MCF 10A (cell line): ENCODE measurements at regions of chr11 and their contacts with region 1.

Region 1: GRCh38 chr11:64971421-64972233 is at the start of gene MAJIN:
- DNase-seq: no peak
- H3K4me3 Mint-ChIP-seq: no peak within 1 kb of the TSS
- H3K27ac Mint-ChIP-seq: peak within 1 kb of the TSS; percentile 76
- H3K4me1 Mint-ChIP-seq: peaks cover 21% of the 10 kb centered on the region
- H3K27me3 Mint-ChIP-seq: no peaks in the 10 kb centered on the region
- CTCF ChIP-seq: no peak
- total RNA-seq, gene MAJIN: not detected in 2 replicates

Region 2: DNA sequence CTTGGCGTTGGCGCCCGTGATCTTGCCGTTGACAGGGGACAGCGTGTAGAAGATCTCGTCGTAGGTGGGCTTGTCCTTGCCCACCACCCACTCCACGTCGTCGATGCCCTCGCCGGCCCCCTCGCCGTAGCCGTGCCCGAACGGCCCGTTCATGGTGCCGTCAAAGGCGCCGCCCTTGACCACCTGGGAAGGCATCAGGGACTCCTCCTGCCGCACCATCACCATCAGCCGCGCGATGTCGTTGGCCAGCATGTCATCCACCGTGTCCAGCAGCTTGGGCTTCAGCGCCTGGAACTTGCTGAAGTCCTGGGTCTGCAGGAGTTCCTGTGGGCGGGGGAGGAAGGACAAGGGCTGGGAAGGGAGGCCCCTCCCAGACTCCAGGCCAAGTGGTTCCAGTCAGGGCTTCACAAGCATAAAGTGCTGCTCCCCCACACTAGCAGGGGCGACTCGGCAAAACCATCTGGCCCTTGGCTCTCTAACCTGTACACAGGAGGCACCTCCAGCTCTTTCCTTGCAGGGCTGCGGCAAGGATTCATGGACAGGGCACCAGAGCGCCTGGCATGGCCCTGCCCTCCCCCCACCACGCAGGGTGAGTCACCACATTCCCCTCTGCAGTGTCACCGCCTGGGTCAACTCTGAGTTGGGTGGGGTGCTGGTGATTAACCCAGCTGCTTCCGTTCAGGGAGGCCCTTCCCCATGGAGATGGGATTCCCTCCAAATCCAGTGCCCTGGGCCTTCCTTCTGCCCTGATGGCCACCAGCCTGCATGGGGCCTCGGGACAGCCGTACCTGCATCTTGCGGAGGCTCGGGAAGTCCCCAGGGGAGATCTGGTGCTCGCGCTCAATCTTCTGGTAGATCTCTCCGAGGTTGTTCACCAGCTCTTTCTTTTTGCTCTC is 116.8 kb before region 1 on chr11:
- CTCF ChIA-PET with region 1: no interaction called
- POLR2A ChIA-PET with region 1: no interaction called
- intact Hi-C with region 1: no loop called
- DNase-seq: peak; percentile 97
- H3K4me3 Mint-ChIP-seq: peak overlapping the region; percentile 54
- H3K27ac Mint-ChIP-seq: peak overlapping the region; percentile 86
- H3K4me1 Mint-ChIP-seq: peaks cover 28% of the 10 kb centered on the region
- H3K27me3 Mint-ChIP-seq: no peaks in the 10 kb centered on the region
- CTCF ChIP-seq: no peak

Region 3: DNA sequence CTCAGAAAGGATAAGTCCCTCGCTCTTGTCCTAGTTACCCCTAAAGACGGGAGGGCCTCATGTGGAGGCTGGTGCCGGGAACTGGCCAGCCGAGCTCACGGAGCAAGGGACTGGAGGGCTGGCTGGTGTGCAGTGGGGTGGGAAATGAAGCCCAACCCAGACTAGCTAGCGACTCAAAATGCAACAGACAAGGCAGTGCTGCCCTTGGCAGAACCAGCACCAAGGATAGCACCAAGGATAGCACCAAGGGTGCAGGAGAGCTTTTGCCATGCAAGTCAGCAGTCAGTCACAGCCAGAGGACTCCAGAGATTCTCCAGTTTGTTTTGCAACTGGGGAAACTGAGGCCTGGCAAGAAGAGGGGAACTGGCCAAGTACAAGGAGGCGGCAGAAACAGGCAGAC is 31.7 kb after region 1 on chr11:
- CTCF ChIA-PET with region 1: no interaction called
- POLR2A ChIA-PET with region 1: interaction called, 6 read pairs
- intact Hi-C with region 1: loop called (anchors 2 kb)
- DNase-seq: no peak
- H3K4me3 Mint-ChIP-seq: no peak overlapping the region
- H3K27ac Mint-ChIP-seq: no peak overlapping the region
- H3K4me1 Mint-ChIP-seq: no peaks in the 10 kb centered on the region
- H3K27me3 Mint-ChIP-seq: no peaks in the 10 kb centered on the region
- CTCF ChIP-seq: no peak